GM23248 (cell line): ENCODE measurements at regions of chr17 and their contacts with region 1.

Region 1: DNA sequence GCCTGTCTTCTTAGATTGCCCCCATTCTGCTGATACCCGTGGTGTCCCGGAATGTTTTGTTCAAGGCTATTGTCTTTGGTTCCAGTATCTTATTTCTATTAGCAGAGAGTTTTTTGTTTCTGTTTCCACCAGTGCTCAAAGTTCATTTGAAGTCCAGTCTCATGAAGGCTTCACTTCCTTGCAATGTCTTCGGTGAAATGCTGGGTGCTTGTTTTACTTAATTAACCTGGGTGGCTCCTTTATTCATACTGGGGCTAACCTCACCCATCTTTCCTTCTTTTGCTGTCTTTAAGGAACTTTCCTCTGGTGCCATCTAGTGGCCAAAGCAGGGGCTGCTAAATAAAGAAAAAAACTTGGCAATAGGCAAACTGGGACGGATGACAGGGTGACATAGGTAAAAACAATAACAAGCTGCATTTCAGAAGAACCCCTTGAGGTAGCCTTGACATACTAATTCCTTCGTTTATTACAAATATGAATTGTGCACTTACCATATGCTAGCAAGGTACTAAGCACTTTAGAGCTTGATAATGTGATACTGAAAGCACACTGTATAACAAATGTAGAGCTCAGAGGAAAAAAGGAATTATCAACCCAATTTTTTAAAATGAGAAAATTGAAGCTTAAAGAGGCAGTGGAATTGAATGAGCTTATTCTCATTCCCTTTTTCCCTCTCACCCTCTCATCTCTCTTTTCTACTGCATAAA is 2.8 kb upstream of the SMIM36 start:
- DNase-seq: peak; percentile 68
- H3K4me3 ChIP-seq: no peak overlapping the region
- H3K27ac ChIP-seq: no peak overlapping the region
- H3K4me1 ChIP-seq: peaks cover 6% of the 10 kb centered on the region
- H3K27me3 ChIP-seq: peaks cover 11% of the 10 kb centered on the region; the same call in 1 of the 2 replicates

Region 2: GRCh38 chr17:54992797-54993639 is 521.0 kb before region 1 on chr17:
- in situ Hi-C with region 1: loop called (anchors 25 kb)
- DNase-seq: peak; percentile 69
- H3K4me3 ChIP-seq: no peak overlapping the region
- H3K27ac ChIP-seq: no peak overlapping the region
- H3K4me1 ChIP-seq: no peaks in the 10 kb centered on the region
- H3K27me3 ChIP-seq: no peaks in the 10 kb centered on the region

Region 3: DNA sequence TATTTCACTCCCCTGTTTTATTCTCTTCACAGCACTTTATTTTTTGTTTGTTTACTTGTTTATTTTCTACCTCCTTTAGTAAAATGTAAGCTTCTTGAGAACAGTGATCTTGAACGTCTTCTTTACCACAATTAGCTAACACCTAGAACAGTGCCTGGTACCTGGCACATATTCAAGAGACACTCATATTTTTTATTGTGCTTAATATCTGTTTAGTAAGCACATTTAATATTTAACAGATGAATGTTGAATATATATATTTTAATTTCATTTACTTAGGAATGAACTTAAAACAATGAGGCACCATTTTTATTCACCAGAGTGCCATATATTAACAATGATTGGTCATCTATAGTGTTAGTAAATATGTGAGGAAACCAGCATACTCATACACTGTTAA is 415.3 kb before region 1 on chr17:
- in situ Hi-C with region 1: no loop called
- DNase-seq: no peak
- H3K4me3 ChIP-seq: no peak overlapping the region
- H3K27ac ChIP-seq: no peak overlapping the region
- H3K4me1 ChIP-seq: no peaks in the 10 kb centered on the region
- H3K27me3 ChIP-seq: no peaks in the 10 kb centered on the region

Region 4: GRCh38 chr17:55363033-55363432 is 151.0 kb before region 1 on chr17:
- in situ Hi-C with region 1: loop called (anchors 5 kb)
- DNase-seq: no peak
- H3K4me3 ChIP-seq: no peak overlapping the region
- H3K27ac ChIP-seq: no peak overlapping the region
- H3K4me1 ChIP-seq: no peaks in the 10 kb centered on the region
- H3K27me3 ChIP-seq: peaks cover 3% of the 10 kb centered on the region

Region 5: GRCh38 chr17:56222255-56222654 is 708.2 kb after region 1 on chr17:
- in situ Hi-C with region 1: no loop called
- DNase-seq: peak; percentile 23
- H3K4me3 ChIP-seq: no peak overlapping the region
- H3K27ac ChIP-seq: no peak overlapping the region
- H3K4me1 ChIP-seq: 0 out of 2 replicates have a peak, but pooled peaks cover 5% of the 10 kb centered on the region
- H3K27me3 ChIP-seq: no peaks in the 10 kb centered on the region